Common myeloid progenitor, CD34-positive (primary cell): ENCODE measurements at regions of chr7 and their contacts with region 1.

Region 1: GRCh38 chr7:141975806-141976523 is 2.4 kb upstream of the TAS2R38 start:
- DNase-seq: peak; percentile 62 to 73 (median 69)
- H3K4me3 ChIP-seq: peak overlapping the region; percentile 35 to 88 (median 67)
- H3K27ac ChIP-seq: no peak overlapping the region
- H3K4me1 ChIP-seq: peaks cover 0 to 22% (median 7%) of the 10 kb centered on the region in 4 experiments
- H3K27me3 ChIP-seq: no peaks in the 10 kb centered on the region

Region 2: GRCh38 chr7:141754939-141755338 is 221.0 kb before region 1 on chr7:
- CTCF ChIA-PET with region 1: interaction called, 12 read pairs
- POLR2A ChIA-PET with region 1: no interaction called
- DNase-seq: peak; percentile 22 to 48 (median 41)
- H3K4me3 ChIP-seq: no peak overlapping the region
- H3K27ac ChIP-seq: no peak overlapping the region
- H3K4me1 ChIP-seq: no peaks in the 10 kb centered on the region
- H3K27me3 ChIP-seq: no peaks in the 10 kb centered on the region

Region 3: DNA sequence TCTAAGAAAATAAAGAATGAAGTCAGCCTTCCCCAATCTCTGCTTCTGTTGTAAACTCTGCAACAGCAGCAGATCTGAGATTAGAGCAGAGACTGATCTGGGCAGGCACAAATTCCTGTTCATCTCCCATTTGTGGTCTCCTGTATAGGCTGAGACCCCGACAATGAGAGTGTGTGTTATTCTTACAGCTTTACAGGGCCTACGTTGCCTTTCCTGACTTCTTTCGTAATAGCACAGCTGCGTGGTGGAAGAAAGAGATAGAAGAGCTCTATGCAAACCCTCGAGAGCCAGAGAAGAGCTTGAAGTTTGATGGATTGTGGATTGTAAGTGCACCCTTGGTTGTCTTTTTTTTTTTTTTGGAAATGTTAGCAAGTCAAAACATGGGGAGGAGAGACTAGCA is 209.8 kb after region 1 on chr7:
- CTCF ChIA-PET with region 1: interaction called, 19 read pairs
- POLR2A ChIA-PET with region 1: no interaction called
- DNase-seq: peak in 1 of 3 donors; percentile 8
- H3K4me3 ChIP-seq: no peak overlapping the region
- H3K27ac ChIP-seq: no peak overlapping the region
- H3K4me1 ChIP-seq: peaks cover 0 to 15% (median 5%) of the 10 kb centered on the region in 4 experiments
- H3K27me3 ChIP-seq: peaks cover 0 to 2% (median 0%) of the 10 kb centered on the region in 5 experiments

Region 4: GRCh38 chr7:142263598-142264380 is 287.8 kb after region 1 on chr7:
- CTCF ChIA-PET with region 1: no interaction called
- POLR2A ChIA-PET with region 1: no interaction called
- DNase-seq: no peak
- H3K4me3 ChIP-seq: no peak overlapping the region
- H3K27ac ChIP-seq: no peak overlapping the region
- H3K4me1 ChIP-seq: no peaks in the 10 kb centered on the region
- H3K27me3 ChIP-seq: peaks cover 0 to 4% (median 0%) of the 10 kb centered on the region in 5 experiments